Heart right ventricle (tissue), 16 donors: ENCODE measurements at regions of chr5 and their contacts with region 1.

Region 1: GRCh38 chr5:179771311-179771895 is 22.4 kb upstream of the LTC4S start:
- DNase-seq: no peak
- ATAC-seq: no peak
- H3K4me3 ChIP-seq: no peak overlapping the region
- H3K27ac ChIP-seq: peak overlapping the region in 1 of 10 donors; percentile 47
- H3K4me1 ChIP-seq: peaks cover 0 to 46% (median 17%) of the 10 kb centered on the region in 9 donors
- H3K27me3 ChIP-seq: no peaks in the 10 kb centered on the region
- CTCF ChIP-seq: no peak

Region 2: GRCh38 chr5:179648410-179648809 is 123.0 kb before region 1 on chr5:
- intact Hi-C with region 1: no loop called
- DNase-seq: no peak
- ATAC-seq: no peak
- H3K4me3 ChIP-seq: no peak overlapping the region
- H3K27ac ChIP-seq: no peak overlapping the region
- H3K4me1 ChIP-seq: no peaks in the 10 kb centered on the region
- H3K27me3 ChIP-seq: no peaks in the 10 kb centered on the region
- CTCF ChIP-seq: no peak

Region 3: DNA sequence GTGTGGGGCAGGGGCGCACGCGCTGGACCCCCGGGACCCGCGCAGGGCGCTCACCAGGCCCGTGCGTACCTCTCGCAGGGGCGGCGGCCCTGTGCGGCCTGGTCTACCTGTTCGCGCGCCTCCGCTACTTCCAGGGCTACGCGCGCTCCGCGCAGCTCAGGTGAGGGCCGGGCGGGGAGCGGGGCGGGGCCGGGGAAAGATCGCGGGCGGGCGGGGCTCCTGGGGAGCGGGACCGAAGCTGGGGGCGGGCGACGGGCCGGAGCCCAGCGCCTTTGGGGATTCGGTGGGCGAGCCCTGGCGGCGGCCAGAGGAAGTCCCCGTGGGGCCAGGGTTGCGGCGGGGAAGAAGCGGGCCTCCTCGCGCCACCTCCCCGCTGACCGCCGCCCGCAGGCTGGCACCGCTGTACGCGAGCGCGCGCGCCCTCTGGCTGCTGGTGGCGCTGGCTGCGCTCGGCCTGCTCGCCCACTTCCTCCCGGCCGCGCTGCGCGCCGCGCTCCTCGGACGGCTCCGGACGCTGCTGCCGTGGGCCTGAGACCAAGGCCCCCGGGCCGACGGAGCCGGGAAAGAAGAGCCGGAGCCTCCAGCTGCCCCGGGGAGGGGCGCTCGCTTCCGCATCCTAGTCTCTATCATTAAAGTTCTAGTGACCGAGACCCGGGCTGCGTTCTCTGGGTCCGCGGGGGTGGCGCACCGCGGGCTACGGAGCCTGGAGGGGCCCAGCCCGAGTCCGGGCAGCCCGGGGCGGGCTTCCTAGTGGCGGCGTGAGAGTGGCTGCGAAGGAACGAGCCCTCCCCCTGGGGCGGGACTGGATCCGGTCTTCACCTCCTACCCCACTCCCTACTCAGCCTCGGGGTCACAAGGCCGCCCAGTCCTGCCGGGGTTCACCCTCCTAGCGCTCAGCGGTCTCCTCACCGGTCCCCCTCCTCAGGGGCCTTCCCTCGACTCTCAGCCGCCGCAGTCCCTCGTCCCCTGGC is 24.7 kb after region 1 on chr5:
- intact Hi-C with region 1: loop called in 1 of 10 experiments (anchors 2 kb)
- DNase-seq: peak; percentile 78 to 84
- ATAC-seq: peak; percentile 64 to 77 (median 70)
- H3K4me3 ChIP-seq: peak overlapping the region; percentile 43 to 84 (median 66)
- H3K27ac ChIP-seq: peak overlapping the region; percentile 71 to 92 (median 85)
- H3K4me1 ChIP-seq: peaks cover 33 to 57% (median 54%) of the 10 kb centered on the region in 9 donors
- H3K27me3 ChIP-seq: no peaks in the 10 kb centered on the region
- CTCF ChIP-seq: peak; percentile 68 to 98 (median 86)

Region 4: GRCh38 chr5:179936976-179937681 is 165.7 kb after region 1 on chr5:
- intact Hi-C with region 1: no loop called
- DNase-seq: no peak
- ATAC-seq: no peak
- H3K4me3 ChIP-seq: no peak overlapping the region
- H3K27ac ChIP-seq: no peak overlapping the region
- H3K4me1 ChIP-seq: no peaks in the 10 kb centered on the region
- H3K27me3 ChIP-seq: no peaks in the 10 kb centered on the region
- CTCF ChIP-seq: no peak